Gastrocnemius medialis (tissue), 4 donors: ENCODE measurements at regions of chr3 and their contacts with region 1.

Region 1: GRCh38 chr3:33717866-33718594 is at the start of gene CLASP2:
- DNase-seq: peak; percentile 77 to 81
- ATAC-seq: peak; percentile 94 to 95
- H3K4me3 ChIP-seq: peak within 1 kb of the TSS; percentile 82 to 93 (median 88)
- H3K27ac ChIP-seq: peak within 1 kb of the TSS; percentile 93 to 99 (median 96)
- H3K4me1 ChIP-seq: peaks cover 11 to 12% of the 10 kb centered on the region in 2 donors
- H3K27me3 ChIP-seq: no peaks in the 10 kb centered on the region
- CTCF ChIP-seq: peak in 1 of 5 experiments; percentile 23
- POLR2A ChIP-seq: peak; percentile 71 to 79
- total RNA-seq, gene CLASP2: 37.6 to 55.2 (median 44.6) TPM

Region 2: GRCh38 chr3:33113772-33114621 is 604.0 kb before region 1 on chr3 and contains the start of gene CRTAP:
- in situ Hi-C with region 1: no loop called
- intact Hi-C with region 1: loop called (anchors 10 kb)
- DNase-seq: peak; percentile 92 to 97
- ATAC-seq: peak; percentile 76 to 80
- H3K4me3 ChIP-seq: peak within 1 kb of the TSS; percentile 69 to 90 (median 70)
- H3K27ac ChIP-seq: peak within 1 kb of the TSS; percentile 87 to 96 (median 94)
- H3K4me1 ChIP-seq: peaks cover 9% of the 10 kb centered on the region in 2 donors
- H3K27me3 ChIP-seq: no peaks in the 10 kb centered on the region
- CTCF ChIP-seq: peak in 1 of 5 experiments; percentile 17
- POLR2A ChIP-seq: peak; percentile 38 to 48
- total RNA-seq, gene CRTAP: 75.2 to 107 (median 83.1) TPM

Region 3: GRCh38 chr3:33440323-33441232 is 277.5 kb before region 1 on chr3 and contains the start of gene UBP1:
- in situ Hi-C with region 1: no loop called
- intact Hi-C with region 1: loop called (anchors 2 kb)
- DNase-seq: peak; percentile 99 to 100
- ATAC-seq: peak; percentile 90 to 93
- H3K4me3 ChIP-seq: peak within 1 kb of the TSS; percentile 70 to 91 (median 80)
- H3K27ac ChIP-seq: peak within 1 kb of the TSS; percentile 92 to 95 (median 94)
- H3K4me1 ChIP-seq: peaks cover 36 to 39% of the 10 kb centered on the region in 2 donors
- H3K27me3 ChIP-seq: no peaks in the 10 kb centered on the region
- CTCF ChIP-seq: peak in 1 of 5 experiments; percentile 11
- POLR2A ChIP-seq: peak; percentile 62 to 83
- total RNA-seq, gene UBP1: 19.1 to 28.9 (median 24.2) TPM

Region 4: GRCh38 chr3:33636125-33636850 is 81.7 kb before region 1 on chr3:
- in situ Hi-C with region 1: loop called in 1 of 4 experiments (anchors 10 kb)
- intact Hi-C with region 1: loop called (anchors 1 kb)
- DNase-seq: no peak
- ATAC-seq: peak in 1 of 2 donors; percentile 65
- H3K4me3 ChIP-seq: no peak overlapping the region
- H3K27ac ChIP-seq: no peak overlapping the region
- H3K4me1 ChIP-seq: no peaks in the 10 kb centered on the region
- H3K27me3 ChIP-seq: no peaks in the 10 kb centered on the region
- CTCF ChIP-seq: peak; percentile 38 to 72 (median 59)
- POLR2A ChIP-seq: no peak

Region 5: GRCh38 chr3:33658991-33659848 is 58.8 kb before region 1 on chr3:
- in situ Hi-C with region 1: loop called in 1 of 4 experiments (anchors 10 kb)
- intact Hi-C with region 1: loop called (anchors 1 kb)
- DNase-seq: peak; percentile 66 to 77
- ATAC-seq: peak; percentile 89 to 93
- H3K4me3 ChIP-seq: peak overlapping the region; percentile 50 to 64 (median 58)
- H3K27ac ChIP-seq: peak overlapping the region; percentile 82 to 90 (median 86)
- H3K4me1 ChIP-seq: peaks cover 38 to 54% of the 10 kb centered on the region in 2 donors
- H3K27me3 ChIP-seq: no peaks in the 10 kb centered on the region
- CTCF ChIP-seq: peak in 1 of 5 experiments; percentile 25
- POLR2A ChIP-seq: peak in 1 of 2 donors; percentile 45

Region 6: GRCh38 chr3:33787328-33788009 is 69.4 kb after region 1 on chr3:
- in situ Hi-C with region 1: loop called in 1 of 4 experiments (anchors 10 kb)
- intact Hi-C with region 1: loop called (anchors 1 kb)
- DNase-seq: peak; percentile 9 to 41
- ATAC-seq: peak; percentile 83 to 93
- H3K4me3 ChIP-seq: peak overlapping the region in 3 of 4 donors; percentile 22 to 48 (median 37)
- H3K27ac ChIP-seq: no peak overlapping the region
- H3K4me1 ChIP-seq: no peaks in the 10 kb centered on the region
- H3K27me3 ChIP-seq: no peaks in the 10 kb centered on the region
- CTCF ChIP-seq: peak; percentile 40 to 81 (median 64)
- POLR2A ChIP-seq: no peak

Region 7: DNA sequence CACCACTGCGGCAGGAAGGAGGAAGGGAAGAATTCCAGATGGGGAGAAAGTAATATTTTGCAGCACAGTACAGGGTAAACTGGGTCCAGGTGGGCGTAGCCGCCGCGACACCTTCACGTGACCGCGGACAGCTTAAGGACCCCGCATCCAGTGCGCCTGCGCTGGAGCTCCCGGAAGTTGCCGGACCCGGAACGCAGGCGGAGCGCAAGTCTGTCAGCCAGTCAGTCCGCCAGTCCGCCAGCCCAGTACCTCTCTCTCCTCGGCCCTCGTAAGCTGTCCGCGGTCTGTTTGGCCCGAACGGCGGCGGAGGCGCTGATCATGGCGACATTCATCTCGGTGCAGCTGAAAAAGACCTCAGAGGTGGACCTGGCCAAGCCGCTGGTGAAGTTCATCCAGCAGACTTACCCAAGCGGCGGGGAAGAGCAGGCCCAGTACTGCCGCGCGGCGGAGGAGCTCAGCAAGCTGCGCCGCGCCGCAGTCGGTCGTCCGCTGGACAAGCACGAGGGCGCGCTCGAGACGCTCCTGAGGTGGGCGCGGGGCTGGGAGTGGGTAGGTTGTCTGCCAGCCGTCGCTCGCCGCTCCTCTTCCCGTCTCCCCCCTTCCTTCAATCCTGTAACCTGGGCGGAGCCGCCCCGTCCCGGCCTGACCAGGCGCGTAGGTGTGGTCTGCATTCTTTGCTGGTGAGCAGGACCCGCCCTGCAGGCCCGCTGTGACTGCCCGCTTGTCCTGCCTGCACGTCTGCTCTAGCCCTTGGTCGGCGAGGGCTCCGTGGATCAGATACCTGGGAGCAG is 80.6 kb after region 1 on chr3 and contains the start of gene PDCD6IP:
- in situ Hi-C with region 1: no loop called
- intact Hi-C with region 1: loop called (anchors 2 kb)
- DNase-seq: peak; percentile 90 to 92
- ATAC-seq: peak; percentile 96
- H3K4me3 ChIP-seq: peak within 1 kb of the TSS; percentile 93 to 100 (median 95)
- H3K27ac ChIP-seq: peak within 1 kb of the TSS; percentile 92 to 98 (median 98)
- H3K4me1 ChIP-seq: peaks cover 32 to 46% of the 10 kb centered on the region in 2 donors
- H3K27me3 ChIP-seq: no peaks in the 10 kb centered on the region
- CTCF ChIP-seq: peak in 4 of 5 experiments; percentile 9 to 35 (median 26)
- POLR2A ChIP-seq: peak; percentile 89 to 93
- total RNA-seq, gene PDCD6IP: 93.9 to 181 (median 127) TPM